GM12878 (cell line): ENCODE measurements at regions of chr6 and their contacts with region 1.

Region 1: GRCh38 chr6:15473741-15474161 is 189.1 kb downstream of the DTNBP1 start:
- DNase-seq: no peak
- ATAC-seq: no peak
- H3K4me3 ChIP-seq: no peak overlapping the region
- H3K27ac ChIP-seq: no peak overlapping the region
- H3K4me1 ChIP-seq: no peaks in the 10 kb centered on the region
- H3K27me3 ChIP-seq: no peaks in the 10 kb centered on the region
- CTCF ChIP-seq: no peak
- EP300 ChIP-seq: no peak
- POLR2A ChIP-seq: no peak
- RAD21 ChIP-seq: no peak

Region 2: GRCh38 chr6:15420959-15421438 is 52.8 kb before region 1 on chr6:
- CTCF ChIA-PET with region 1: no interaction called
- POLR2A ChIA-PET with region 1: no interaction called
- RAD21 ChIA-PET with region 1: no interaction called
- SMC1A ChIA-PET with region 1: no interaction called
- in situ Hi-C with region 1: no loop called
- intact Hi-C with region 1: no loop called
- DNase-seq: no peak
- ATAC-seq: peak; percentile 88
- H3K4me3 ChIP-seq: peak overlapping the region; percentile 59
- H3K27ac ChIP-seq: peak overlapping the region; percentile 90
- H3K4me1 ChIP-seq: peaks cover 29% of the 10 kb centered on the region
- H3K27me3 ChIP-seq: no peaks in the 10 kb centered on the region
- CTCF ChIP-seq: no peak
- EP300 ChIP-seq: 0 out of 4 replicates have a peak, but pooled peaks of 1 of the 2 experiments have one; percentile 9
- POLR2A ChIP-seq: no peak
- RAD21 ChIP-seq: no peak

Region 3: GRCh38 chr6:15491255-15491985 is 17.7 kb after region 1 on chr6:
- CTCF ChIA-PET with region 1: interaction called, 13 read pairs
- POLR2A ChIA-PET with region 1: no interaction called
- RAD21 ChIA-PET with region 1: no interaction called
- SMC1A ChIA-PET with region 1: interaction called, 4 read pairs
- in situ Hi-C with region 1: no loop called
- intact Hi-C with region 1: no loop called
- DNase-seq: peak; percentile 17
- ATAC-seq: peak; percentile 94
- H3K4me3 ChIP-seq: no peak overlapping the region
- H3K27ac ChIP-seq: no peak overlapping the region
- H3K4me1 ChIP-seq: no peaks in the 10 kb centered on the region
- H3K27me3 ChIP-seq: no peaks in the 10 kb centered on the region
- CTCF ChIP-seq: peak; percentile 86 to 87 (median 86)
- EP300 ChIP-seq: no peak
- POLR2A ChIP-seq: no peak
- RAD21 ChIP-seq: peak; percentile 91